WTC11 (cell line): ENCODE measurements at regions of chr10 and their contacts with region 1.

Region 1: GRCh38 chr10:103564776-103565520 is 71.4 kb downstream of the NEURL1 start:
- DNase-seq: peak; percentile 87
- ATAC-seq: peak; percentile 93
- H3K4me3 Mint-ChIP-seq: no peak overlapping the region
- H3K27ac Mint-ChIP-seq: no peak overlapping the region
- H3K4me1 Mint-ChIP-seq: no peaks in the 10 kb centered on the region
- H3K27me3 Mint-ChIP-seq: no peaks in the 10 kb centered on the region; the same call in 1 of the 2 replicates
- CTCF ChIP-seq: peak; percentile 99

Region 2: GRCh38 chr10:103542764-103543616 is 22.0 kb before region 1 on chr10:
- CTCF ChIA-PET with region 1: interaction called, 26 read pairs
- POLR2A ChIA-PET with region 1: no interaction called
- DNase-seq: peak; percentile 45
- ATAC-seq: peak; percentile 89
- H3K4me3 Mint-ChIP-seq: peak overlapping the region; percentile 59
- H3K27ac Mint-ChIP-seq: peak overlapping the region; percentile 7
- H3K4me1 Mint-ChIP-seq: peaks cover 16% of the 10 kb centered on the region
- H3K27me3 Mint-ChIP-seq: peaks cover 3% of the 10 kb centered on the region; the same call in 1 of the 2 replicates
- CTCF ChIP-seq: no peak

Region 3: GRCh38 chr10:103548581-103549348 is 16.2 kb before region 1 on chr10:
- CTCF ChIA-PET with region 1: interaction called, 26 read pairs
- POLR2A ChIA-PET with region 1: no interaction called
- DNase-seq: peak; percentile 5
- ATAC-seq: no peak
- H3K4me3 Mint-ChIP-seq: no peak overlapping the region
- H3K27ac Mint-ChIP-seq: no peak overlapping the region
- H3K4me1 Mint-ChIP-seq: peaks cover 2% of the 10 kb centered on the region; the same call in 1 of the 2 replicates
- H3K27me3 Mint-ChIP-seq: peaks cover 4% of the 10 kb centered on the region; the same call in 1 of the 2 replicates
- CTCF ChIP-seq: no peak

Region 4: DNA sequence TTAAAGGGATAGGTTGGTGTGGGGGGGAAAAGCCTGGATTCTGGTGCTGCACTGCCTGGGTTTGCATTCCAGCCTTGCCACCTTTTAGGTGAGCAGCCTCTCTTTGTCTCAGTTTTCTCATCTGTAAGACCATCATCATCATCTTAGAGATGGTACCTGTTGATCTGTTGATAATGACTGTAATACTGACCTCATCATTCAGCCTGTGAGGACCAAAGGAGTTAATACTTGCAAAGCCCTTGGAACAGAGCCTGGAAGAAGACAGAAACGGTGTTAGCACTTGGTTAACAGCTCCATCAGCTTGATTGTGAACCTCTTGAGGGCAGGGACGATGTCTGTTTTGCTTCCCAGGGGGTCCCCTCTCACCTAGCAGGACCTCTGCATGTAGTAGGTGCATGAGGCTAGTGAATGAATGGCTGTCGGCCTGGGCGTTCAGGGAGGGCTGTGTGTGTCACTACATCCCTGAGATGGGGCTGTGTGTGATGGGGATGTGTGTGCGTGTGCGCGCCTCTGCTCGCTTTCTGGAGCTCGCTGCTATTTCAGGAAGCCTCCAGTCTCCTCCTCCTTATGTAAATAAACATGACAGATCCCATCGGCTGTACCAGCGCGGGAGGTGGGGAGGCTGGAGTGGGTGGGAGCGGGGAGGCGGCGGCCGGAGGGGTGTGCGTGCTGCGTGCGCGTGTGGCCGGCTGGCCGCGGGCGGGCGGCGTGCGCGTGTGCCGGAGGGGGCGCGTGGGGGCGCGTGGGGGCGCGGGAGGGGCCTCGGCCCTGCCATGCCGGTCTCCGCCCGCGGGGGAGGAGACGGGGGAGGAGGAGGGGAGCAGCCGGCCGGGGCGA is 10.2 kb before region 1 on chr10:
- CTCF ChIA-PET with region 1: interaction called, 21 read pairs
- POLR2A ChIA-PET with region 1: no interaction called
- DNase-seq: peak; percentile 62
- ATAC-seq: peak; percentile 79
- H3K4me3 Mint-ChIP-seq: peak overlapping the region; percentile 71
- H3K27ac Mint-ChIP-seq: no peak overlapping the region
- H3K4me1 Mint-ChIP-seq: 0 out of 2 replicates have a peak, but pooled peaks cover 3% of the 10 kb centered on the region
- H3K27me3 Mint-ChIP-seq: peaks cover 26% of the 10 kb centered on the region
- CTCF ChIP-seq: no peak

Region 5: DNA sequence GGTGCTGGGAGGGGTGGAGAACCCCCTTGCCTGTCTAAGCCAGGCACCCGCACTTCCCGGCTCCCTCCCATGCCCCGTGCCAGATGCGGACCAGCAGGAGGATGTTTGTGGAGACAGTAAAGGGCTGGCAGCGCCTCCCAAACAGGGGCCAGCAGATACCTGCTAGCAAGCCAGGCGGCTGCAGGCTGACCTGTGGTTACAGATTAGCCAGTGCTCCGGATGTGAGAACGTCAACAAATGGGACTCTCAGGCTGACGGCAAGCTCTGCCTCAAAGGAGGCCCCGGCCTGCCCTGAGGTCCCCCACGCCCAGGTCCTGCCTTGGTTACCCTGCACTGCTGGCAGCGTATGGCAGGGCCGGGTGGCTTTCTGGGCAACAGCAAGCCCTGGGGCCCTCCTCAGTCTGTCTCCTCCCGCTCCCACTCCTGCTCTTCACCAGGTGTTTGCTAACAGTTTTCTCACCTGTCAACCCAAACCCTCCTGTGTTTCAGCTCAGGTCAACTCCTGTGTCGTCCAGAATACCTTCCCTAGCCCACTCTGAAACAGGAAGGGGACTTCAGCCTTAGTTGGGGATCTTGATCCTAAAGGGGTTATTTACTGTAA is 13.9 kb after region 1 on chr10:
- CTCF ChIA-PET with region 1: interaction called, 11 read pairs
- POLR2A ChIA-PET with region 1: no interaction called
- DNase-seq: no peak
- ATAC-seq: no peak
- H3K4me3 Mint-ChIP-seq: no peak overlapping the region
- H3K27ac Mint-ChIP-seq: no peak overlapping the region
- H3K4me1 Mint-ChIP-seq: 0 out of 2 replicates have a peak, but pooled peaks cover under 1% of the 10 kb centered on the region
- H3K27me3 Mint-ChIP-seq: peaks cover 16% of the 10 kb centered on the region
- CTCF ChIP-seq: no peak